Breast epithelium (tissue), 4 donors: ENCODE measurements at regions of chr4 and their contacts with region 1.

Region 1: GRCh38 chr4:99324979-99325378 is 3.8 kb upstream of the ADH1B start:
- DNase-seq: peak in 1 of 2 donors; percentile 36
- H3K4me3 ChIP-seq: no peak overlapping the region
- H3K27ac ChIP-seq: peak overlapping the region; percentile 63 to 73
- H3K4me1 ChIP-seq: no peaks in the 10 kb centered on the region
- H3K27me3 ChIP-seq: no peaks in the 10 kb centered on the region
- CTCF ChIP-seq: no peak
- POLR2A ChIP-seq: no peak

Region 2: DNA sequence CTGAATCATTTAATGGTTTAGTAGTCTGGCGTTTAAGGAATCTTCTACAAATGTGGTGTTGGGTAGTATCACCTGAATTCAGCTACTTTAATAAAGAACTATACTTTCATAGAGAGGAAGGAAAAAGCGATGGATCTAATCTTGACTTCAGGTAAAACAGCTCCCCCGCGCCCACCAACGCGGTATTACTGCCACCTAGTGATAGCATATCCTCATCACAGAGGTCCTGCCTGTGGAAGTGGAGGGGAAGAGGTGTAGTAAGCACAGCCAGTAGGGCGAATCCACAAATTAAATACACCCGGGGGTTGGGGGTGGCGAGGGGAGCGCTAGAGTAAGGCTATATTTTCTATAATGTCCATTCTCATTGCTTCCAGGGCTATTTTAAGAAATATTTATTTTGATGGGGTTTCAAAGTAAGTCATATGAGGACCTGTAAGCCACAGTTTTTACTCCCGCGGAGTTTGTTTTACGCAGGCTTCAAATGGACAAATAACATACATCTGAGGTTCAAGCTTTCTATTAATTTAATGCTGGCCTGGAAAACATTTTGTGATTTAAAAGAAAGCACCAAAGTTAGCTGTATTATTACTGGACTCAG is 483.4 kb after region 1 on chr4:
- intact Hi-C with region 1: loop called (anchors 5 kb)
- DNase-seq: no peak
- H3K4me3 ChIP-seq: no peak overlapping the region
- H3K27ac ChIP-seq: no peak overlapping the region
- H3K4me1 ChIP-seq: no peaks in the 10 kb centered on the region
- H3K27me3 ChIP-seq: no peaks in the 10 kb centered on the region
- CTCF ChIP-seq: peak in 1 of 3 donors; percentile 32
- POLR2A ChIP-seq: no peak